Adrenal gland (tissue), 19 donors: ENCODE measurements at regions of chr16 and their contacts with region 1.

Region 1: DNA sequence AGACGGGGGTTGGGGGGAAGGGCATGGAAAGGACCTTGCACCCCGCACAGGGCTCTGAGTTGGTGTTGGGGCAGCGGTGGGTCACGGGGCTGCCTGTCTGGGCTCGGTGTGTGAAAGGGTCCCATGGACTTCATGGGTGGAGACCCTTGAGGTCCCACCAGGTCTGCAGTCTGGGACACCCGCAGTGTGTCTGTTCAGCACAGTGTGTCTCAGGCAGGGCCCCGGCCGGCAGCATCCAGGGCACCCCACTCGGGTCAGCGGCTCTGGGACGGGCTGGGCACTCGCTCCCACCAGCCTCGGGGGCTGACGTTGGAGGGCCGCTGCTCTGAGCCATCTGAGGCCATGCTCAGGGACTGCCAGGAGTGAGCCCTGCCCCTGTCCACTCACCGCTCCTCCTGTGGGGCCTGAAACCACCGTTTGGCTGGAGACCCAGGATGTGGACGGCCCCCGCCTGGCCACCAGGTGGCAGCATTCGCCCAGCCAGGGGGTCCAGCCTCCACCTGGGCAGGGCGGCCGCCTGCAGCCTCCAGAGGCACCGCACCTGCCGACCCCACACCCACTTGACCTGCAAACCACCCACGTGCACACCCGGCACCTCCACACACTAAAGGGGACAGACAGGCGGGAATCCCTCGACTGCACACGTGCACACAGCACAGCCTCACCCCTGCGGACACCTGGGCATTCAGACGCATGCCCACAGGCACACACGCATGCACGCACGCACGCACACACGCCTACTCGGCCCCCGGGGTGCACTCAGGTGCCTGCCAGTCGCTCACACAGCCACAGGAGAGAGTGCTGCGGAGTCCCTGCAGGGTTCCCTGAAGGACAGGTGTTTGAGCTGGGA is 10.1 kb upstream of the ZFPM1 start:
- DNase-seq: peak; percentile 72 to 90 (median 80)
- H3K4me3 ChIP-seq: no peak overlapping the region
- H3K27ac ChIP-seq: no peak overlapping the region
- H3K4me1 ChIP-seq: no peaks in the 10 kb centered on the region
- H3K27me3 ChIP-seq: no peaks in the 10 kb centered on the region
- CTCF ChIP-seq: peak; percentile 94 to 99 (median 97)
- POLR2A ChIP-seq: no peak

Region 2: GRCh38 chr16:88527186-88527936 is 84.4 kb after region 1 on chr16:
- intact Hi-C with region 1: loop called (anchors 2 kb)
- DNase-seq: peak in 6 of 7 donors; percentile 37 to 85 (median 66)
- H3K4me3 ChIP-seq: no peak overlapping the region
- H3K27ac ChIP-seq: peak overlapping the region in 1 of 5 donors; percentile 17
- H3K4me1 ChIP-seq: peaks cover 0 to 16% of the 10 kb centered on the region in 2 donors
- H3K27me3 ChIP-seq: no peaks in the 10 kb centered on the region
- CTCF ChIP-seq: peak; percentile 61 to 91 (median 86)
- POLR2A ChIP-seq: no peak

Region 3: GRCh38 chr16:88561485-88562369 is 118.8 kb after region 1 on chr16:
- intact Hi-C with region 1: loop called (anchors 5 kb)
- DNase-seq: peak; percentile 45 to 69 (median 59)
- H3K4me3 ChIP-seq: peak overlapping the region in 1 of 4 donors; percentile 36
- H3K27ac ChIP-seq: no peak overlapping the region
- H3K4me1 ChIP-seq: peaks cover 0 to 4% of the 10 kb centered on the region in 2 donors
- H3K27me3 ChIP-seq: no peaks in the 10 kb centered on the region
- CTCF ChIP-seq: peak; percentile 42 to 69 (median 54)
- POLR2A ChIP-seq: no peak

Region 4: DNA sequence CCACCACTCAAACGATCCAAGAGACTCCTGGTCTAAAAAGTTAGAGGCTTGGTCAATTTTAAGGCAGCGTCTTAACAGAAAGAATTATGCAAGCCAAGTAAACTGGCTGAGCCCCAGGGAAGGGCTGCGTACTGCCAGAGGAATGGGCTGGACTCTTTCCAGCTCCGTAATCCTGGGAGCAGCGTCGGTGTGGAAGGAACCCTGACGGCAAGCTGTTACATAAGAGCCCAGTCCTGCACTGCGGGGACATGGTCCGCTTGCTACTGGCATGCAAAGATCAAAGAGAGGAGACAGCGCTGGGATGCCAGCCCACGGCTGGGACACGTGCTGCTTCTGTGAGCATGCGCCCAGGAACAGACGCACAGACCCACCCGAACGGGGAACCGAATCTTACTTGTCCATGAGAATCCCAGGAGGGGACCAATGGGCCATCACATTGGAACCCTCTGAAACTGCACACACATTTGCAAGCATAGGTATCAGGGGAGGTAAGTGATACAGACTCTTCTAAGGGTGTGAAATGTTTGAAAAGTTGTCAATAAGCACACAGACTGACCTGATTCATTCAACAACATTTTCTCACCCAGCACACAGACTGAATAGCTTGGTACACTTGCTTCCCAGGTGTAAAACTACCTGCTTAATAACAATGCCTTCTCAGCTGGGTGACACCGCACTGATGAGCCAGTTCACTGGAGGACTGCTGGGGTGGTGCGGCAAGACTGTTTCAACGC is 952.4 kb after region 1 on chr16:
- intact Hi-C with region 1: no loop called
- DNase-seq: peak; percentile 93 to 98 (median 98)
- H3K4me3 ChIP-seq: no peak overlapping the region
- H3K27ac ChIP-seq: peak overlapping the region; percentile 15 to 93 (median 70)
- H3K4me1 ChIP-seq: peaks cover 19 to 38% of the 10 kb centered on the region in 2 donors
- H3K27me3 ChIP-seq: no peaks in the 10 kb centered on the region
- CTCF ChIP-seq: no peak
- POLR2A ChIP-seq: peak in 1 of 2 donors; percentile 63